GM10248 (cell line): ENCODE measurements at regions of chr7 and their contacts with region 1.

Region 1: DNA sequence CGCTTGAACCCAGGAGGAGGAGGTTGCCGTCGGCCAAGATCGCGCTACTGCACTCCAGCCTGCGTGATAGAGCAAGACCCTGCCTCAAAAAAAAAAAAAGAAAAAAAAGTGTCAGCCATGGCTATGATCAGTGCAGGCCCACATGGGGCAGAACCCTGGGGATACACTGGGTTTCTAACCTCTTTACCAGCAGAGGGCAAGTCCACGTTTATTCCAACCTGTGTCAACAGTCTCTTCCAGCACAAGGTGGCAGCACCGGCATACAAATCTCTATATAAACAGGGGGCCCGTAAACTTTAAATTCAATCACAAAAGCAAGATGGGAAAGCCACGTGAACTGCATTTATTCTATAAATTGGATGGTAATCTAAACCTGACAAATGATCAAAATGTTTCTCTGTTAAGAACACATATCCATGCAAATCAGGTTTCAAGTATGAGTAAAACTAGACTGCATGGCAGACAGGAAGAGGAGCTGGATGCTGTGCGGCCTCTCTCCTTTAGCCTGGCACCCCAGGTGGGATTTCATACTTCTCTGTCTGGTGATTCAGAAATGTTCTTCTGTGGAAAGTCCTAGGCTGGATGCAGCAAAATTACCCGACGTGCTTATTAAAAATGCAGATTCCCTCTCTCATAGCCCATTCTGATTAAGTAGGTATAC is 60.0 kb upstream of the STEAP1B start:
- DNase-seq: peak; percentile 72
- CTCF ChIP-seq: peak; percentile 80

Region 2: GRCh38 chr7:22346383-22347107 is 213.4 kb before region 1 on chr7:
- CTCF ChIA-PET with region 1: no interaction called
- POLR2A ChIA-PET with region 1: no interaction called
- DNase-seq: no peak
- CTCF ChIP-seq: no peak

Region 3: GRCh38 chr7:22697876-22698606 is 138.1 kb after region 1 on chr7:
- CTCF ChIA-PET with region 1: interaction called, 12 read pairs
- POLR2A ChIA-PET with region 1: no interaction called
- DNase-seq: peak; percentile 52
- CTCF ChIP-seq: no peak

Region 4: GRCh38 chr7:22765609-22766008 is 205.7 kb after region 1 on chr7:
- CTCF ChIA-PET with region 1: no interaction called
- POLR2A ChIA-PET with region 1: no interaction called
- DNase-seq: peak; percentile 41
- CTCF ChIP-seq: no peak

Region 5: GRCh38 chr7:22776964-22777363 is 217.0 kb after region 1 on chr7:
- CTCF ChIA-PET with region 1: interaction called, 92 read pairs
- POLR2A ChIA-PET with region 1: no interaction called
- DNase-seq: no peak
- CTCF ChIP-seq: no peak